ENCODE measurements at regions of chr1 and their contacts with region 1.

Region 1: DNA sequence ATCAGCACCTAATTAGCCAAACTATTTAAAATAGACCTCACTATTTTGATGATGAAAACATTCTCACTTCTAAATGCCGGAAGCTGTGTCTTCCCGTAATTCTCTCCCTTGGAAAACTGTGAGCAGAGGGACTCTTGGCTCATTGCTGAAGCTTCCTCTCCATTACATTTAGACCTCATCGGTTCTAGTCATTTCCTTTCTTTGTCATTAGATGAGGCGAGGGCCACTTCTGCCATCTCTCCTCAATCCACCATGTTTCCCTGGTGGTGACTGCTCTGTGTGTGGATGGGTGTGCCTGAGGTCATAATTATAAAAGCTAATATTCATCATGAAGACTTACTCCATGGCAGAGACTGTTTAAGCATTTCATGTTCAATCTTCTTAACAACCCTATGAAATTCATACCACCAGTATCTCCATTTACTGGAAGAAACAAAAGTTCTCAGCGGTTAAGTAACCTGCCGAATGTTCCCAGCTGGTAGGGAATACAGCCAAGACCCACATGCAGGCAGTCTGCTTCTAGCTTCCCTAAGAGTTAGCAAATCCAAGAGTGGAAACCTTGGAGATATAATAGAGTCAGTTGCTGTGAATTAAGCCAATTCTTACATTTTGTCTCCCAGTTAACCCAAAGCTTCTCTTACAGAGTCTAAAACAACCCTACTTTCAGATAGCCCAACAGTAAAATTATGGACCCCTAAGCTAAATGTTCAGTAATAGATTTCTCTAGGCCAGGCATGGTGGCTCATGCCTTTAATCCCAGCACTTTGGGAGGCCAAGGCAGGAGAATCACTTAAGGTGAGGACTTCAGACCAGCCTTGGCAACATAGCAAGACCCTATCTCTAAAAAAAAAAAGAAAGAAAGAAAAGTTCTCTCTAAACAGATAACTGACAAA is 156.2 kb downstream of the ZBTB18 start:
- DNase-seq: no peak
- H3K4me3 ChIP-seq: no peak overlapping the region
- H3K27ac ChIP-seq: no peak overlapping the region
- H3K4me1 ChIP-seq: peaks cover 4% of the 10 kb centered on the region
- H3K27me3 ChIP-seq: no peaks in the 10 kb centered on the region
- CTCF ChIP-seq: no peak
- POLR2A ChIP-seq: no peak

Region 2: DNA sequence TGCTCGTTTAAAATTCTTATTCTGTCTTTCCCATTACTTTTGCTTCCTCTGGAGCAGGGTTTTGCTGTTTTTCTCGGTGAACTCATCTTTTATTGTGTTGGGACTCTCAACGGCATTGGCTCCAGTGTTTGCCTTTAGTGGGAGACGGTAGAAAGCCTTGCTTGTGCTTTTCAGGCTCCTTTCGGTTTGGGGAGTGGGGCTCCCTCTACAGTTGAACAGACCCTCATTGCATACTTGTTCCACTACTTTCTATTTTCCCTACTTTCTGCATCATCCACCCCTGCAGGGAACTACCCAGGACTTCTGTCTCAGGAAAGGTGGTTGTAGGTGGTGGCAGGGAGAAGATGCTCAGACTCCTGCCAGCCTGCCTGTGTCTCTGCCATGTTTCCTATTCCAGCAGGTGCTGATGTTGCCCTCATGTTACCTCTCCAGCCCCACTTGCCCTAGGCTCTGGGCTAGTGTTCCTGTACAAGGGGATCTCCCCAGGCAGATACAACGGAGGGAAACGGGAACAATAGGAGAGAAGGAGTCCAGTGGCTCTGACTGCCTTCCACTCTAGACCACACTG is 224.8 kb before region 1 on chr1:
- intact Hi-C with region 1: no loop called
- DNase-seq: no peak
- H3K4me3 ChIP-seq: no peak overlapping the region
- H3K27ac ChIP-seq: no peak overlapping the region
- H3K4me1 ChIP-seq: no peaks in the 10 kb centered on the region
- H3K27me3 ChIP-seq: no peaks in the 10 kb centered on the region
- CTCF ChIP-seq: no peak
- POLR2A ChIP-seq: no peak

Region 3: DNA sequence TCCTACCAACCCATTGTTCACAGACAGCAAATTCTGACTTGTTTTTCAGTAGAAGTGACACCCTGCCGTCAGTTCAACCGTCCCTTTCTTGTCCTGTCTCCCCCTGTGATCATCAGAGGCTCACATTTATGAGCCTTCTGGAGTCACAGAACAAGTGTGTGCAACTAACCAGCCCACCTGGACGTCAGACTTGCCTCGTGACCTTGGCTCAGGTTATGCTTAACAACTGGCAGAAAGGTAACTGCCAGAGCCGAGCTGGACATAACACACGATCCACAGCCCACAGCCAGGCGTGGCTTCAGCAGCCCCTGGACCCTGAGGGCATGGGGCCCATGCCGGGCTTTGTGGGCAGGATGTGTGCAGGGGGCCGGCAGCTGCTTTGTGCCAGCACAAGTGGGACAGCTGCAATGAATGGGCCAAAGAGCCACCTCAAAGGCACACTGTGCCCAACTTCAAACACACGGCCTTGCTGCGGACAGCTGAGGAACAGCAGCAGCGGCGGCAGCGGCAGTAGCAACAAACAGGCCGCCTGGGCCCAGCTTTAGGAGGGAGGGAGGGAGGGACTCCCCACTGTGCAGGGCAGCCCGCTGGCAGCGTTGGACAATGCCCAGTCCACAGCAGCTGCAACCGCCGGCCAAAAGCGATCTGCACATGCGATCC is 52.3 kb before region 1 on chr1:
- intact Hi-C with region 1: loop called (anchors 5 kb)
- DNase-seq: no peak
- H3K4me3 ChIP-seq: no peak overlapping the region
- H3K27ac ChIP-seq: no peak overlapping the region
- H3K4me1 ChIP-seq: no peaks in the 10 kb centered on the region
- H3K27me3 ChIP-seq: no peaks in the 10 kb centered on the region
- CTCF ChIP-seq: no peak
- POLR2A ChIP-seq: no peak

Region 4: GRCh38 chr1:244371242-244372141 is 164.2 kb after region 1 on chr1:
- intact Hi-C with region 1: no loop called
- DNase-seq: peak; percentile 75
- H3K4me3 ChIP-seq: no peak overlapping the region
- H3K27ac ChIP-seq: peak overlapping the region; percentile 59 to 73
- H3K4me1 ChIP-seq: peaks cover 5% of the 10 kb centered on the region
- H3K27me3 ChIP-seq: no peaks in the 10 kb centered on the region
- CTCF ChIP-seq: no peak
- POLR2A ChIP-seq: no peak